ENCODE measurements at regions of chr3 and their contacts with region 1.

Region 1: GRCh38 chr3:8769088-8769822 is at the start of gene OXTR:
- DNase-seq: peak; percentile 57
- H3K4me3 Mint-ChIP-seq: peak within 1 kb of the TSS; percentile 73
- H3K27ac Mint-ChIP-seq: no peak within 1 kb of the TSS
- H3K4me1 Mint-ChIP-seq: peaks cover 7% of the 10 kb centered on the region
- H3K27me3 Mint-ChIP-seq: peaks cover 14% of the 10 kb centered on the region
- CTCF ChIP-seq: peak; percentile 99
- total RNA-seq, gene OXTR: 0.63 and 1.2 TPM in 2 replicates

Region 2: GRCh38 chr3:8663177-8664061 is 105.8 kb before region 1 on chr3:
- CTCF ChIA-PET with region 1: interaction called, 31 read pairs
- POLR2A ChIA-PET with region 1: no interaction called
- intact Hi-C with region 1: loop called (anchors 1 kb)
- DNase-seq: peak; percentile 81
- H3K4me3 Mint-ChIP-seq: no peak overlapping the region
- H3K27ac Mint-ChIP-seq: no peak overlapping the region
- H3K4me1 Mint-ChIP-seq: peaks cover 29% of the 10 kb centered on the region
- H3K27me3 Mint-ChIP-seq: peaks cover 10% of the 10 kb centered on the region
- CTCF ChIP-seq: peak; percentile 68

Region 3: GRCh38 chr3:8755563-8756237 is 13.6 kb before region 1 on chr3:
- CTCF ChIA-PET with region 1: interaction called, 31 read pairs
- POLR2A ChIA-PET with region 1: no interaction called
- intact Hi-C with region 1: no loop called
- DNase-seq: peak; percentile 20
- H3K4me3 Mint-ChIP-seq: no peak overlapping the region
- H3K27ac Mint-ChIP-seq: no peak overlapping the region
- H3K4me1 Mint-ChIP-seq: peaks cover 13% of the 10 kb centered on the region
- H3K27me3 Mint-ChIP-seq: no peaks in the 10 kb centered on the region
- CTCF ChIP-seq: no peak

Region 4: DNA sequence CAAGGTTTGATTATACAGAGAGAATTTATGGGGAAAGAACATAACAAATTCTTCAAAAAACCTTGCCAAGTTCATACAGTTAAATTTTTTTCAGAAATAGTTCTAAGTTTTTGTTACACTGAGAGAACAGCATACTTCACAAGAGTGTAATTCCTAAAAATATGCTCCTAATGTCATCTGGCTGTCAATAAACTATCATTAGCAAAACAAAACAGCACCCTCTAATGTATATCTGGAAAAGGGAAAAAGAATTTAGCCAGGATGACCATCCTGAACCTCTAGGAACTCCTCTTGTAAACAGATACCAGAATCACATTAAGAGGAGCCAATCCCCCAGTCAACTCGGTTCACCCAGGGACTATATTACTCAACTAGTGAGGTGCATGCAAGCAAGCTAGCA is 130.7 kb after region 1 on chr3:
- CTCF ChIA-PET with region 1: interaction called, 7 read pairs
- POLR2A ChIA-PET with region 1: no interaction called
- intact Hi-C with region 1: loop called (anchors 1 kb)
- DNase-seq: peak; percentile 0
- H3K4me3 Mint-ChIP-seq: no peak overlapping the region
- H3K27ac Mint-ChIP-seq: no peak overlapping the region
- H3K4me1 Mint-ChIP-seq: no peaks in the 10 kb centered on the region
- H3K27me3 Mint-ChIP-seq: no peaks in the 10 kb centered on the region
- CTCF ChIP-seq: no peak

Region 5: GRCh38 chr3:8970971-8971589 is 201.8 kb after region 1 on chr3:
- CTCF ChIA-PET with region 1: interaction called, 5 read pairs
- POLR2A ChIA-PET with region 1: no interaction called
- intact Hi-C with region 1: loop called (anchors 1 kb)
- DNase-seq: peak; percentile 75
- H3K4me3 Mint-ChIP-seq: no peak overlapping the region
- H3K27ac Mint-ChIP-seq: no peak overlapping the region
- H3K4me1 Mint-ChIP-seq: no peaks in the 10 kb centered on the region
- H3K27me3 Mint-ChIP-seq: peaks cover 10% of the 10 kb centered on the region
- CTCF ChIP-seq: peak; percentile 95

Measured in MCF 10A (cell line).